CD14-positive monocyte (primary cell): ENCODE measurements at regions of chr12 and their contacts with region 1.

Region 1: GRCh38 chr12:7219599-7220243 is 30.2 kb downstream of the PEX5 start:
- DNase-seq: peak; percentile 54 to 75 (median 64)
- H3K4me3 ChIP-seq: no peak overlapping the region
- H3K4me3 Mint-ChIP-seq: no peak overlapping the region
- H3K27ac ChIP-seq: no peak overlapping the region
- H3K27ac Mint-ChIP-seq: no peak overlapping the region
- H3K4me1 ChIP-seq: no peaks in the 10 kb centered on the region
- H3K4me1 Mint-ChIP-seq: no peaks in the 10 kb centered on the region
- H3K27me3 ChIP-seq: no peaks in the 10 kb centered on the region
- H3K27me3 Mint-ChIP-seq: peaks cover 0 to 2% (median 0%) of the 10 kb centered on the region in 3 donors
- CTCF ChIP-seq: peak; percentile 85

Region 2: DNA sequence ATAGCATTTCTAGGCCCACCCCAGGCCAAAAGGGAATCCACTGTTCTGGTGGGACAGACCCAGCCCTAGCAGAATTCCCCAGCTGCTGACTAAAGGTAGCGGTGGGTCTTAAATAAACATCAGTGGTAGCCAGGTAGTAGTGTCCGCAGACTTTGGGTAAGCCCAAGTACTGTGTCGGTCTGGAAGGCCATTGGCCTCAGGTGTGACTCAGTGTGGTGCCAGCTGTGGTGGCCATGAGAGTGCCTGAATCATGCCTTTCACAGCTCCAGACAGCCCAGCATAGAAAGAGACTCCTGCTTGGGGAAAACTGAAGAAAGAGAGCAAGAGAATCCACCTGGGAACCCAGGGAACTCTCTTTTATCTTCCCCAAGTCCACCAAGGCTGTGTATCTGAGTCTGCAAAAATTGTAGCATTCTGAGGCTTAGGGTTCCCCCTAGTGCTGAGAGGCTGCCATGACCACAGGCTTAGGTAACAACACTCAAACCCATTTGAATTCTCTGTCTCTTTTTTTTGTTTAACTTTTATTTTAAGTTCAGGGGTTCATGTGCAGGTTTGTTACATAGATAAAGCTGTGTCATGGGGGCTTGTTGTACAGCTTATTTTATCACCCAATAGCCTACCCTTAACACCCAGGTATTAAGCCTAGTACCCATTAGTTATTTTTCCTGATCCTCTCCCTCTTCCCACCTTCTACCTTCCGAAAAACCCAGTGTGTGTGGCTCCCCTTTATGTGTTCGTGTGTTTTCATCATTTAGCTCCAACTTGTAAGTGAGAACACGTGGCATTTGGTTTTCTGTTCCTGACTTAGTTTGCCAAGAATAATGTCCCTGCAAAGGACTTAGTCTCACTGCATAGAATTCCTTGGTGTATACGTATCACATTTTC is 240.9 kb after region 1 on chr12:
- intact Hi-C with region 1: loop called (anchors 2 to 5 kb)
- DNase-seq: peak; percentile 30 to 52 (median 43)
- H3K4me3 ChIP-seq: no peak overlapping the region
- H3K4me3 Mint-ChIP-seq: no peak overlapping the region
- H3K27ac ChIP-seq: no peak overlapping the region
- H3K27ac Mint-ChIP-seq: no peak overlapping the region
- H3K4me1 ChIP-seq: no peaks in the 10 kb centered on the region
- H3K4me1 Mint-ChIP-seq: no peaks in the 10 kb centered on the region
- H3K27me3 ChIP-seq: no peaks in the 10 kb centered on the region
- H3K27me3 Mint-ChIP-seq: peaks cover 0 to 2% (median 2%) of the 10 kb centered on the region in 3 donors
- CTCF ChIP-seq: peak; percentile 89

Region 3: DNA sequence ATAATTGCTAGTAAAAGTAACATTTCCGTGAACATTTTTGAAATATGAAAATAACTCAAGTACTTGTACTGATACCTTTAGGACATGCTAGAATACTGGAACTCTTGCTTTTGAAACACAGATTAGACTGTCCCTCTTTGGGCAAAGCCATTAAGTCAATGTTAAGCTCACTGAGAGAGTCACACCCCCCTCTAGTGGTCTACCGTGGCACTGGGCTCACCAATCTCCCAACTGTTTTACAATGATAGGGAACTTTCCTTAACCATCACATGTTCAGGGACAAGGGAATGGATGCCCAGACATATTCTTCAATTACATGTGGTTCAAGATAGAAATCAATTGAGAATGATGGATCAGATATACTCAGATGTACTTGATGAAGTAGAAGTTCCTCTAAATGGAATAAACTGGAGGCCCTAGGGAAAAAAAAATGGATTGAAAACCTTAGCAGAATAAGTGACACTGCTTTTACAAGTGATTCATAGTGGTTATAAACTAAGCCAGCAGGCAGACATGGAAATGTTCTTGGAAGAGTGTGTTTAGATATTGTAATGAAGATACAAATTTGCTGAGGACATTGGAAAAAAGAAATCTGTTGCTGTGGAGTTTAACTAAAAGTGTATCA is 587.3 kb after region 1 on chr12:
- intact Hi-C with region 1: loop called in 1 of 2 experiments (anchors 10 kb)
- DNase-seq: peak; percentile 38 to 71 (median 60)
- H3K4me3 ChIP-seq: no peak overlapping the region
- H3K4me3 Mint-ChIP-seq: no peak overlapping the region
- H3K27ac ChIP-seq: no peak overlapping the region
- H3K27ac Mint-ChIP-seq: no peak overlapping the region
- H3K4me1 ChIP-seq: no peaks in the 10 kb centered on the region
- H3K4me1 Mint-ChIP-seq: peaks cover 4% of the 10 kb centered on the region
- H3K27me3 ChIP-seq: no peaks in the 10 kb centered on the region
- H3K27me3 Mint-ChIP-seq: no peaks in the 10 kb centered on the region
- CTCF ChIP-seq: peak; percentile 96